RWPE1 (cell line): ENCODE measurements at regions of chr5 and their contacts with region 1.

Region 1: DNA sequence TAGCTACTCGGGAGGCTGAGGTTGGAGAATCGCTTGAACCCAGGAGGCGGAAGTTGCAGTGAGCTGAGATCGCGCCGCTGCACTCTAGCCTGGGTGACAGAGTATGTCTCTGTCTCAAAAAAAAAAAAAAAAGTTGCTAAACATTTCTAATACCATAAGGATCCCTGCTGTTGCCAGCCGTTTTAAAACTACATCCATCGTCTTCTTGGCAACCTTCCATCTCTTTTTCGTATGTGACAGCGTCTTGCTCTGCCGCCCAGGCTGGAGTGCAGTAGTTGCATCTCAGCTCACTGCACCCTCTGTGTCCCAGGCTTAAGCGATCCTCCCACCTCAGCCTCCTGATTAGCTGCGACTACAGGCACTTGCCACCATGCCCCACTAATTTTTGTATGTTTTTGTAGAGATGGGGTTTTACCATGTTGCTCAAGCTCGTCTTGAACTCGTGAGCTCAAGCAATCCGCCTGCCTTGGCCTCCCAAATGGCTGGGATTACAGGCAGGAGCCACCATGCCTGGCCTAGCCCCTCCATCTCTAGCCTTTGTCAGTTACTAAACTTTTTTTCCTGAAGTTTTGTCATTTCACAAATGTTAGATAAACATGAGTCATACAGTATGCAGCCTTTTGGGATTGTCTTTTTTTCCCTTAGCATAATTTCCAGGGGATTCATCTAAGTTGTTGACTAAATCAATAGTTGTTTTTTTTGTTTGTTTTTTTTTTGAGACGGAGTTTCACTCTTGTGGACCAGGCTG is 13.5 kb downstream of the NSD1 start:
- DNase-seq: no peak
- H3K27ac ChIP-seq: peak overlapping the region; percentile 11
- CTCF ChIP-seq: no peak

Region 2: GRCh38 chr5:177049285-177049684 is 97.8 kb before region 1 on chr5:
- CTCF ChIA-PET with region 1: no interaction called
- POLR2A ChIA-PET with region 1: no interaction called
- DNase-seq: no peak
- H3K27ac ChIP-seq: no peak overlapping the region
- CTCF ChIP-seq: no peak

Region 3: DNA sequence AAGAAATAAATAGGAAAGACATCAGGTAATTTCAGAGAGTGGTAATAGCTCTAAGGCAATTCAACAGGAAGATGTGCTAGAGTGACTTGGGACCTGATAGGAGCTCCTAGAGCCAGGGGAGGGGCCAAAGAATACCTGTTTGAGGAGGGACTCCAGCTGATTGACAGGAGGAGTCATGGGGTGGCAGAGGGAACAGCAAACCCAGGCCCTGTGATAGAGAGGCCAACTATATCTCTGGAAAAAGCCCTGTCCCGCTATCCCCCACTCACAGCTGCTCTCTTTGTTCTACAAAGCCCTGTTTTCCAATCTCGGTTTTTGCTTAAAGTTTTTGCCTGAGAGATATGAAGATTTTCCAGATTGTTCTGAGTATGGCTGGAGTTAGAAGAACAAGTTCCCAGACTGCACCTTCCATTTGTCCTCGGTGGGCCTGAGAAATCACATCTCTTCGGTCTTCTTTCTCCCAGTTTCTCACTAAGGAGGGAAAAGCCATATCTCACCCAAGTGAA is 22.5 kb before region 1 on chr5:
- CTCF ChIA-PET with region 1: no interaction called
- POLR2A ChIA-PET with region 1: interaction called, 11 read pairs
- DNase-seq: no peak
- H3K27ac ChIP-seq: no peak overlapping the region
- CTCF ChIP-seq: no peak

Region 4: GRCh38 chr5:177176175-177176711 is 29.2 kb after region 1 on chr5:
- CTCF ChIA-PET with region 1: no interaction called
- POLR2A ChIA-PET with region 1: no interaction called
- DNase-seq: no peak
- H3K27ac ChIP-seq: no peak overlapping the region
- CTCF ChIP-seq: no peak